ENCODE measurements at regions of chr6 and their contacts with region 1.

Region 1: GRCh38 chr6:26122793-26123674 is 35.8 kb downstream of the HFE start:
- DNase-seq: peak; percentile 90 to 98
- H3K4me3 ChIP-seq: peak overlapping the region; percentile 83 to 98
- H3K27ac ChIP-seq: peak overlapping the region; percentile 96 to 98
- H3K4me1 ChIP-seq: no peaks in the 10 kb centered on the region
- H3K27me3 ChIP-seq: peaks cover 0 to 3% of the 10 kb centered on the region in 2 donors
- CTCF ChIP-seq: peak in 1 of 4 experiments; percentile 18
- POLR2A ChIP-seq: peak; percentile 63 to 69

Region 2: DNA sequence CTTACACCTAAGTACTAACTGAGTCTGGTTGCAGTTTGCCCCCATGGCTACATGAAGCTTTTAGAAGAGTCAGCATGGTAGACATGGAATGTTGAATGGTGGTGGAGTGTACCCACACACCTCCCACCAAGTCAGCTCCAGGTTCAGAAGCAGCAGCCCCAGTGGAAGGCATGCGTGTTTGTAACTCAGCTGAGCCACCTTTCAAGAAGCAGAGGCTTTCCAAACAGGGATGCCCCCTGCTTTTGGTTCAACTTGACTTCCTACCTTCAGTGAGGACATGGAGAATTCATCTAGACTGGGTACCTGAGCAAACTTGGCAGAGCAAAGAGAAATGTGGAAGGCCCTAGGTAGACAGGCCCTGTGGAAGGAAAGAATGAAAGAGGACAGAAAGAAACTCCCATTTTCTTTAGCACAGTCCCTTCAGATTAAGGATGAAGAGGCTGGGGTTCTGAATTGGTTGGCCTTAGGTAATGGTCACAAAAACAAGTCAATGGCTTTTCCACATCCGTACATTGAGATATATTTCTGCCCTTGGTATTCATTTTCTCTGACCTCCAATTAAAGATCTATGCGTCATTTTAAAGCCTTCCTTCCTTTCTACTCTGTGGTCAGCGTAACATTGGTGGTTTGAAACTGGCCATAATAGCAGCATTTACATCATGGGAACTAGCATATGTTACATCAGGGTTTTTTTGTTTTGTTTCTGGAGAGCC is 17.4 kb after region 1 on chr6:
- intact Hi-C with region 1: no loop called
- DNase-seq: no peak
- H3K4me3 ChIP-seq: no peak overlapping the region
- H3K27ac ChIP-seq: no peak overlapping the region
- H3K4me1 ChIP-seq: no peaks in the 10 kb centered on the region
- H3K27me3 ChIP-seq: no peaks in the 10 kb centered on the region
- CTCF ChIP-seq: no peak
- POLR2A ChIP-seq: no peak

Region 3: DNA sequence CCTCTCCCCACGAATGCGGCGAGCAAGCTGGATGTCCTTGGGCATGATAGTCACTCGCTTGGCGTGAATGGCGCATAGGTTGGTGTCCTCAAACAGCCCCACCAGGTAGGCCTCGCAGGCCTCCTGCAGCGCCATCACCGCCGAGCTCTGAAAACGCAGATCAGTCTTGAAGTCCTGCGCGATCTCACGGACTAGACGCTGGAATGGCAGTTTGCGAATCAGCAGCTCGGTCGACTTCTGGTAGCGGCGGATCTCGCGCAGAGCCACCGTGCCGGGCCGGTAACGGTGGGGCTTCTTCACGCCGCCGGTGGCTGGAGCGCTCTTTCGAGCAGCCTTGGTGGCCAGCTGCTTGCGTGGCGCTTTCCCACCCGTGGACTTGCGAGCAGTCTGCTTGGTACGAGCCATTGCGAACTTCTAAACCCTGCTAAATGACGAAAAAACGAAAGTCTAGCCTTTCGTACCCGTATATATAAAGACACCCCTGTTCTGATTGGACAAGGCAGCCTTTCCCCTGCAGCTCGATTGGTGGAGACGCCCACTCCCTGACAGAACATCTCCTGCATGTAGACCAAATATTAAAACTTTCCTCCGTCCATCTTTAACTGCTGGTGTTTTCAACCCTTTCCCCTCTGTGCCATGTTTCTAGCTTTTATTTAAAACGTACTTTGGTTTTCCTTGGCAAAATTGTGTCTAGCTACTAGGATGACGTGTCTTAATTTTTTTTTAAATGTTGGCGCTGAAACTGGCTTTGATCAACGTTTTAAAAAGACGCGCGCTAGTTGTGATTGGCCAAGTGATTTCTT is 74.0 kb after region 1 on chr6:
- intact Hi-C with region 1: loop called (anchors 10 kb)
- DNase-seq: peak; percentile 66 to 90
- H3K4me3 ChIP-seq: peak overlapping the region; percentile 50 to 54
- H3K27ac ChIP-seq: peak overlapping the region; percentile 91 to 99
- H3K4me1 ChIP-seq: peaks cover 0 to 6% of the 10 kb centered on the region in 2 donors
- H3K27me3 ChIP-seq: peaks cover 0 to 3% of the 10 kb centered on the region in 2 donors
- CTCF ChIP-seq: no peak
- POLR2A ChIP-seq: peak; percentile 69 to 92